ENCODE measurements at regions of chr7 and their contacts with region 1.

Region 1: DNA sequence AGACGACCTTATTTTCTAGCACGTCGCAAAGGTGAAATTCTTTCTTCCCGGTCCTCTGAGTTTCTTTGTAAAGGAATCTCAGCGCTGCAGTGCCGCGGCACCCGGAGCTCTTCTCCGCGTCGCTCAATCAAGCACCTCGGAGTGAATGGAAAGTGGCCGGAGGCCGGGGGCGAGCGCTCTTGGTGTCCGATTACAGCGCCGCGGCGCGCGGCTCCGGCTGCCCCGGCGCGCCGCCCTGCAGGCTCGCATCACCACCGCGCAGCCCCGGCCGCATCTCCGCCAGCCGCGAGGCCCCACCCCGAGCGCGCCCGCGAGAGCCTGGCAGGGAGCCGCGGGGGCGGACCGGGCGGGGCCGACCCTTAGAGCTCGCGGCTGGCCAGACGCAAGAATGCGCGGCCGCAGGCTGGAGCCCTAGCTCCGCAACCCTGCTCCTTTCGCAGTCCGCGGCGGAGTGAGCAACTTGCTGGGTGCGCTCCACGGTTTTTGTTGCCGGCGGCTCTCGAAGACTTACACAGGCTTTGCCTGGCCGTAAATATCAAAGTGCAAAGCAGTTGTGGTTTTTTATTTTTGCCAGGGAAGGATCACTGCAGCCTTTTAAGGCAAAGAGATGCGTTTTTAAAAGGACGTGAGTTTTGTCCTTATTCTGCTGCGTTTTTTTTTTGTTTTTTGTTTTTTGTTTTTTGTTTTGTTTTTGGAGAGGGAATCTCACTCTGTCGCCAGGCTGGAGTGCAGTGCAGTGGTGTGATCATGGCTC is at the start of gene SEMA3C:
- DNase-seq: peak; percentile 54 to 86 (median 68)
- ATAC-seq: peak; percentile 100
- H3K4me3 ChIP-seq: peak within 1 kb of the TSS; percentile 25; the same call in 1 of the 2 replicates
- H3K27ac ChIP-seq: no peak within 1 kb of the TSS
- H3K4me1 ChIP-seq: peaks cover 0 to 6% of the 10 kb centered on the region in 2 experiments; a peak in 2 of 5 replicates
- H3K27me3 ChIP-seq: no peaks in the 10 kb centered on the region
- CTCF ChIP-seq: no peak
- EP300 ChIP-seq: no peak
- POLR2A ChIP-seq: no peak
- RAD21 ChIP-seq: peak in 1 of 2 experiments; percentile 33; a peak in 1 of 4 replicates
- polyA plus RNA-seq, gene SEMA3C: 0.04 TPM in 1 of 2 experiments, not detected in the other

Region 2: DNA sequence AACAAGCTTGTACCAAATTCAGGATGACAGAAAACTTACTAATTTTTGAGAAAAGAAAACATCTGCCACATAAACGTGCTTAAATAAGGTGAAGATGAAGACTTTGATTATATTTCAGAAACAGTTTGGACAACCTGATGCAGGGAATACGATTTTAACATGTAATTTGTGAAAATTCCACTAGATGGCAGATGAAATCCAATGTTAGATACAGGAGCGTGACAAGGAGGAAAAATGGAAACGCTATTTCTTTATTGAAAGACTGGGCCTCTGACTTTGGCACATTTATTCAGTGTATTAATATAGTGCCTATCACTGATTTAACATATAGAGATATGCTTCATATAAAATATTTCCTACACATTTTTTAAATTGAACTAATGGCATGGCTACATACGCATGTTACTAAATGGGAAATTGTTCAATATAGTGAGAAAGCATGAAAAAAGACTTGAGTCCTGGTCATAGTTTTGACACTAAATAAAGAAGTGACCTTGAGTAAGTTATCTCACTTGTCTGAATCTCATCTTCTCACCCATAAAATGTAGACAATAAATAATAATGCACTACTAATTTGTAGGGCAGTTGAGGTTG is 219.9 kb before region 1 on chr7:
- CTCF ChIA-PET with region 1: no interaction called
- POLR2A ChIA-PET with region 1: no interaction called
- in situ Hi-C with region 1: no loop called
- intact Hi-C with region 1: loop called (anchors 10 kb)
- DNase-seq: peak; percentile 22 to 54 (median 24)
- ATAC-seq: peak; percentile 75
- H3K4me3 ChIP-seq: no peak overlapping the region
- H3K27ac ChIP-seq: no peak overlapping the region
- H3K4me1 ChIP-seq: no peaks in the 10 kb centered on the region
- H3K27me3 ChIP-seq: no peaks in the 10 kb centered on the region
- CTCF ChIP-seq: peak in 2 of 3 experiments; percentile 50 to 66; a peak in 4 of 6 replicates
- EP300 ChIP-seq: no peak
- POLR2A ChIP-seq: no peak
- RAD21 ChIP-seq: peak; percentile 84 to 85

Region 3: DNA sequence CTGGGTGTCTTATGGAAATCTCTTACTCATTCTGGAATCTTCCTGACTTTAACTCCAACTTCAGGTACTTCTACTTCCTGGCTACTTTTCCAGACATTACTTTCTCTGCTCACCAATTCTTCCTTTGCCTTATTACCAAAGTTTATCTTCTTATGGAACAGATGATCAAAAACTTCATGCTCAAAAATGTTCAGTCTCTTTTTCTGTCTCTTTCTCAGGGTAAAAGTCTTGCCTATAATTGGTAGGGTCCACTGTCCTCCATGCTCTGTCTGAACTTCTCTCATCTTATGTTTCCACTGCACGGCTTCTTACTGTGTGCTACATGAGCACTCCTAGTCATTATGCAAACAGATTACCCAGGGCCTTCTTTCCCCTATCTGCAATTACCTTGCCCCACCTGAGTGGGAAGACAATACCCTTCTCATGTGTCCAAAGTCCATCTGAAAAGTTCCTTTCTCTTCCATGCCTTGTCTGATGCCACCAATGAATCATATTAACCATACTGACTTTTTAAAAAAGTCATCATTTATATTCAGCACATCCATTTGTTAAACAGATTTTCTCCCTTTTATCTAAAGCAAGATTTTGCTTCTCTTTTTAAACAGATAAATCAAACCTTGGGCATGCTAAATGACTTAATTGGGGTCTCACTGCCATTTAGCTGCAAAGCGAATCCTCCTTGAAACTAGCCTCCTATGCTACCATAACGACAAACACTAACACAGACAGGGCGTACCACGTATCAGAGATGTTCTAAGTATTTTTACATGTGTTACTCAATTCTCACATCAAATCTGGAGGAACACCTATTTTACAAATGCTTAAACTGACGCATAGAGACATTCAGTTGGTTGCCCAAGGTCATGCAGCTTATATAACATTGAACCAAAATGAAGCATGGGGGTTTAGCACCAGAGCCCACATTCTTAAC is 49.0 kb before region 1 on chr7:
- CTCF ChIA-PET with region 1: no interaction called
- POLR2A ChIA-PET with region 1: no interaction called
- in situ Hi-C with region 1: no loop called
- intact Hi-C with region 1: no loop called
- DNase-seq: no peak
- ATAC-seq: no peak
- H3K4me3 ChIP-seq: no peak overlapping the region
- H3K27ac ChIP-seq: no peak overlapping the region
- H3K4me1 ChIP-seq: no peaks in the 10 kb centered on the region
- H3K27me3 ChIP-seq: no peaks in the 10 kb centered on the region
- CTCF ChIP-seq: no peak
- EP300 ChIP-seq: no peak
- POLR2A ChIP-seq: no peak
- RAD21 ChIP-seq: no peak

Region 4: GRCh38 chr7:80940506-80941207 is 21.6 kb after region 1 on chr7:
- CTCF ChIA-PET with region 1: no interaction called
- POLR2A ChIA-PET with region 1: no interaction called
- in situ Hi-C with region 1: no loop called
- intact Hi-C with region 1: no loop called
- DNase-seq: no peak
- ATAC-seq: no peak
- H3K4me3 ChIP-seq: no peak overlapping the region
- H3K27ac ChIP-seq: no peak overlapping the region
- H3K4me1 ChIP-seq: no peaks in the 10 kb centered on the region
- H3K27me3 ChIP-seq: no peaks in the 10 kb centered on the region
- CTCF ChIP-seq: no peak
- EP300 ChIP-seq: no peak
- POLR2A ChIP-seq: no peak
- RAD21 ChIP-seq: no peak

Region 5: GRCh38 chr7:81256991-81257390 is 337.9 kb after region 1 on chr7:
- CTCF ChIA-PET with region 1: no interaction called
- POLR2A ChIA-PET with region 1: no interaction called
- in situ Hi-C with region 1: no loop called
- intact Hi-C with region 1: loop called (anchors 5 kb)
- DNase-seq: peak in 1 of 4 experiments; percentile 37
- ATAC-seq: peak; percentile 66; the same call in 2 of the 3 replicates
- H3K4me3 ChIP-seq: no peak overlapping the region
- H3K27ac ChIP-seq: no peak overlapping the region
- H3K4me1 ChIP-seq: no peaks in the 10 kb centered on the region
- H3K27me3 ChIP-seq: no peaks in the 10 kb centered on the region
- CTCF ChIP-seq: peak; percentile 20 to 31 (median 29); a peak in 3 of 6 replicates
- EP300 ChIP-seq: no peak
- POLR2A ChIP-seq: no peak
- RAD21 ChIP-seq: peak in 1 of 2 experiments; percentile 65; a peak in 3 of 4 replicates

Region 6: GRCh38 chr7:81447351-81447952 is 528.4 kb after region 1 on chr7:
- CTCF ChIA-PET with region 1: no interaction called
- POLR2A ChIA-PET with region 1: no interaction called
- in situ Hi-C with region 1: loop called (anchors 25 kb)
- intact Hi-C with region 1: loop called (anchors 2 kb)
- DNase-seq: peak in 1 of 4 experiments; percentile 34
- ATAC-seq: peak; percentile 73
- H3K4me3 ChIP-seq: no peak overlapping the region
- H3K27ac ChIP-seq: no peak overlapping the region
- H3K4me1 ChIP-seq: no peaks in the 10 kb centered on the region
- H3K27me3 ChIP-seq: no peaks in the 10 kb centered on the region
- CTCF ChIP-seq: peak in 2 of 3 experiments; percentile 17 to 44; a peak in 2 of 6 replicates
- EP300 ChIP-seq: no peak
- POLR2A ChIP-seq: no peak
- RAD21 ChIP-seq: peak; percentile 19 to 35; a peak in 3 of 4 replicates

Region 7: DNA sequence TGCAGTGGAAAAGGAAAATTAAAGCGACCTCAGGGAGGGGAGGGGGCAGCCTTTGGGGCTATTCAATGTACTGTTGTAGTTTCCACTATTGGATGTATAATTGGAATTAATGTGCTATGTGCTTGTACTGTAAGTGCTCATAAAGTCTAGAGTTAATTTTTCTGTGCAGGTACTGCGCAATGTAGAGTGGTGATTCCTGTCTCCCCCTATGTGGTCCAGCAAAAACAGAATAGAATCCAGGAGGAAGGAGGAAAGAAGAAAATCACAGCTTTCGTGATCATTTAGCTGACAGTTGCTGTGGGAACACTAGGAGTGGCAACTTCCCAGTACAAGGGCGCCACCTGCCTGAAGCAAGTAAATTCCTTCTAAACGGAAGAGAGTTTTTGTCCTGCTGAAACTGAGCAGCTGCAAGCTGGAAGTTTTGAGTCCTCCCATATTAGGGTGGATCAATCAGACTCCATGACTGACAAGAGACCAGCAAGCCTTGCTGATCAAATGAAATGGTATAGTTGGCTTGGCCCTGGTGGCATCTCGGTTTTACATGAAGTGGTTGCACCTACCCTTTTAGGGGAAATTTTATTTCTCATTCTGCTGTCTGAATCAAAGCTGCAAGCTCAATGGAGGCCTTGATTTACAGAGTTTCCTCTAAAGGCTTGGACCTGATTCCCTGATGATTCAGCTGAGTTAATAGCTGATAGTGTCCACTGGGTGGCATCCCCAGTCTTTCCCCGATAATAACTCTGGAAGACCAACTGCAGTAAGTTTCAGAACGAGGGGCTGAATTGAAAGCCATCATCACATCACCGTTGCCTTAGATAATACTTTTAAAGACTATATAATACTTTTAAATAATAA is 551.0 kb after region 1 on chr7:
- CTCF ChIA-PET with region 1: no interaction called
- POLR2A ChIA-PET with region 1: no interaction called
- in situ Hi-C with region 1: loop called (anchors 25 kb)
- intact Hi-C with region 1: no loop called
- DNase-seq: peak; percentile 14 to 54 (median 15)
- ATAC-seq: peak; percentile 77
- H3K4me3 ChIP-seq: no peak overlapping the region
- H3K27ac ChIP-seq: no peak overlapping the region
- H3K4me1 ChIP-seq: no peaks in the 10 kb centered on the region
- H3K27me3 ChIP-seq: no peaks in the 10 kb centered on the region
- CTCF ChIP-seq: peak; percentile 51 to 69 (median 60); a peak in 5 of 6 replicates
- EP300 ChIP-seq: no peak
- POLR2A ChIP-seq: no peak
- RAD21 ChIP-seq: peak; percentile 62 to 78